B cell (primary cell): ENCODE measurements at regions of chr10 and their contacts with region 1.

Region 1: DNA sequence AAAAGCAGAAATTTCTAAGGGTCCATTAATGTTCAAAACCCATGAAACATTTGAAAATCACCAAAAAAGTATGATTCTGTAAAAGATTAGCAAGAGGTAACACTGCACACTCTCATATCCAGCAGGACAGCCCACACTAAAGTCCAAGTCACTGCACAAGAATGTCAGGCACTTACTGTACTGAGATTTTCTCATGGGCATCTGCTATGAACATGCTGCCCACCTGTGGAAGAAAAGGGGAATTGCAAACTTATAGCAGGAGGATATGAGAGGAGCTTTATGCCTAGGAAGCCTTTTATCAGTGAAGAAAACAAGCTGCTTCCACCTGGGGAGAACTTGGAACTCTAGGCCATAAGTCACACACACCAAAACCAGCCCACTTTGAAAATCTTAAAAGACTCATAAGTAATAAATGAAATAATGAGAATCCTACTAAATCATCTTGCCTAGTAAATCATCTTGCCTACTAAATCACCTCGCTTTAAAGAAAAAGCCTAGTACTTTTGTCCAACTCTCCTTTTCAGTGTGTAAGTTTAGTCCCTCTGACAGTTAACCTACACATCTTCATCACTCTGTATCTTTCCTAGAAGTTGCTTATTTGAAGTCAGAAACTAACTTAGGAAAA is 46.1 kb downstream of the ARMH3 start:
- DNase-seq: peak; percentile 83
- ATAC-seq: peak; percentile 92
- H3K4me3 ChIP-seq: no peak overlapping the region
- H3K4me3 Mint-ChIP-seq: no peak overlapping the region
- H3K27ac ChIP-seq: peak overlapping the region in 1 of 2 donors; percentile 44
- H3K27ac Mint-ChIP-seq: peak overlapping the region; percentile 8
- H3K4me1 ChIP-seq: peaks cover 54 to 57% of the 10 kb centered on the region in 2 donors
- H3K4me1 Mint-ChIP-seq: peaks cover 46% of the 10 kb centered on the region
- H3K27me3 ChIP-seq: no peaks in the 10 kb centered on the region
- H3K27me3 Mint-ChIP-seq: no peaks in the 10 kb centered on the region
- CTCF ChIP-seq: peak; percentile 94

Region 2: GRCh38 chr10:101848894-101849351 is 161.0 kb before region 1 on chr10:
- CTCF ChIA-PET with region 1: interaction called, 581 read pairs
- POLR2A ChIA-PET with region 1: interaction called, 4 read pairs
- intact Hi-C with region 1: no loop called
- DNase-seq: no peak
- ATAC-seq: no peak
- H3K4me3 ChIP-seq: no peak overlapping the region
- H3K4me3 Mint-ChIP-seq: no peak overlapping the region
- H3K27ac ChIP-seq: no peak overlapping the region
- H3K27ac Mint-ChIP-seq: peak overlapping the region; percentile 37
- H3K4me1 ChIP-seq: peaks cover 9 to 12% of the 10 kb centered on the region in 2 donors
- H3K4me1 Mint-ChIP-seq: peaks cover 10% of the 10 kb centered on the region
- H3K27me3 ChIP-seq: no peaks in the 10 kb centered on the region
- H3K27me3 Mint-ChIP-seq: no peaks in the 10 kb centered on the region
- CTCF ChIP-seq: no peak

Region 3: GRCh38 chr10:101923256-101923655 is 86.7 kb before region 1 on chr10:
- CTCF ChIA-PET with region 1: interaction called, 10 read pairs
- POLR2A ChIA-PET with region 1: interaction called, 3 read pairs
- intact Hi-C with region 1: no loop called
- DNase-seq: no peak
- ATAC-seq: no peak
- H3K4me3 ChIP-seq: no peak overlapping the region
- H3K4me3 Mint-ChIP-seq: peak overlapping the region; percentile 46
- H3K27ac ChIP-seq: peak overlapping the region in 1 of 2 donors; percentile 29
- H3K27ac Mint-ChIP-seq: peak overlapping the region; percentile 64
- H3K4me1 ChIP-seq: peaks cover 7 to 11% of the 10 kb centered on the region in 2 donors
- H3K4me1 Mint-ChIP-seq: peaks cover 35% of the 10 kb centered on the region
- H3K27me3 ChIP-seq: no peaks in the 10 kb centered on the region
- H3K27me3 Mint-ChIP-seq: no peaks in the 10 kb centered on the region
- CTCF ChIP-seq: no peak

Region 4: DNA sequence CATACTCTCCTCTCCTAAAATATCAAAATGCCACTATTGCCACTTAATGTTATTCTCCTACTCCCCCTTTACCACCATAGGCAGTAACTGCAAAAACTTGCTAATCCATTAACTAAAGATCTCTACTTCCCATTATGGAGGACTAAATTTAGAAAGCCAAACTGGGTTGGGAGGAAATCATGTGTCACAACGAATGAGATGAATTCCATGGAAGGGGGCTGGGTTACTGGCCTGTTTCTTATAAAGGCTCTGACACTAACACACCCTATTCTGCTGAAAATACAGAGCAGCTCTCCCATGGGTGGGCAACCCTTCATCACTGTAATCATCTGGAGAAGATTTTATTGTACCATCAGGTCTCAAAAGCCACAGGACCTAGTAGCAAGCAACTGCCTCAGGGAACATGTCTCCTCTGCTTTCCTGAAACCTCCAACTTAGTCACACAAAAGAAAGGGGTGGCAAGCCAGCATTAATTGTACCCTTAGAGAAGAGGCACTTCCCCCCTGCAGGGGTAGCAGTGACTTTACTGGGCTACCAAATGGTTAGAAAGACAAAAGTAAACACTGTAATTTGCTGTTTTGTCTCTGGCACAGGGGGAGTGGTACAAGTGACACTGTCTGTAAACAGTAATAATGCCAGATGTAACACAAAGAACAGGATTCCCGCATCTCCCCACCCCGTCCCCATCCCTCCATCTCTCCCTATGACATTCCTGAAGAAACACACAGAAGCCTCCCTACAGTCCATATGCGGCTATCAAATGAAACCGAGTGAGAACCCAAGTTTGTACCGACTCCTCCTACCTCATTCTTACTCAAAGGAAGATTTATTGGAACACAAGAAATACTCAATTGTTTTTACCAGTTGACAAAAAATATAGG is 35.6 kb before region 1 on chr10:
- CTCF ChIA-PET with region 1: interaction called, 32 read pairs
- POLR2A ChIA-PET with region 1: interaction called, 7 read pairs
- intact Hi-C with region 1: no loop called
- DNase-seq: no peak
- ATAC-seq: no peak
- H3K4me3 ChIP-seq: peak overlapping the region in 1 of 5 experiments; percentile 56
- H3K4me3 Mint-ChIP-seq: peak overlapping the region; percentile 90
- H3K27ac ChIP-seq: peak overlapping the region; percentile 77 to 80
- H3K27ac Mint-ChIP-seq: peak overlapping the region; percentile 97
- H3K4me1 ChIP-seq: peaks cover 54 to 58% of the 10 kb centered on the region in 2 donors
- H3K4me1 Mint-ChIP-seq: peaks cover 60% of the 10 kb centered on the region
- H3K27me3 ChIP-seq: no peaks in the 10 kb centered on the region
- H3K27me3 Mint-ChIP-seq: no peaks in the 10 kb centered on the region
- CTCF ChIP-seq: no peak

Region 5: DNA sequence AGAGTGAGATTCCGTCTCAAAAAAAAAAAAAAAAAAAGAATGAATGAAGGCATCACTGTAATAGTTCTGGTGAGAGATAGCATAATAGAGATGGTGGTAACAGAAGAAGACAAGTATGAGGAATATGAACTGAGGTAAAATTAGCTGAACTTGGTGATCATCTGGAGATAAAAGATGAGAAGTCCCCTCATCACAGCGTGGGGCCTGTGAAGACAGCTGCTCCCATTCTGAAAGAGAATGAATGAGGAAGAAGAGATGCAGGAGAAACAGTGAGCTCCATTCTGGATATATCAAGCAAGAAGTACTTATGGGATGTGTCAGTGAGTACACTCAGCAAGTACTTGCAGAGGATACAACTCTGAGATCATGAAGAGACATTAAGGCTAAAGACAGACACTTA is 17.3 kb after region 1 on chr10:
- CTCF ChIA-PET with region 1: interaction called, 21 read pairs
- POLR2A ChIA-PET with region 1: no interaction called
- intact Hi-C with region 1: no loop called
- DNase-seq: no peak
- ATAC-seq: no peak
- H3K4me3 ChIP-seq: no peak overlapping the region
- H3K4me3 Mint-ChIP-seq: no peak overlapping the region
- H3K27ac ChIP-seq: no peak overlapping the region
- H3K27ac Mint-ChIP-seq: no peak overlapping the region
- H3K4me1 ChIP-seq: no peaks in the 10 kb centered on the region
- H3K4me1 Mint-ChIP-seq: no peaks in the 10 kb centered on the region
- H3K27me3 ChIP-seq: no peaks in the 10 kb centered on the region
- H3K27me3 Mint-ChIP-seq: no peaks in the 10 kb centered on the region
- CTCF ChIP-seq: no peak